ENCODE measurements at regions of chr19 and their contacts with region 1.

Region 1: GRCh38 chr19:6516659-6517291 is 14.1 kb upstream of the TNFSF9 start:
- DNase-seq: peak; percentile 85 to 99 (median 96)

Region 2: GRCh38 chr19:6443986-6444385 is 72.8 kb before region 1 on chr19:
- intact Hi-C with region 1: no loop called
- DNase-seq: no peak

Region 3: GRCh38 chr19:6453951-6454565 is 62.7 kb before region 1 on chr19:
- intact Hi-C with region 1: no loop called
- DNase-seq: no peak

Region 4: DNA sequence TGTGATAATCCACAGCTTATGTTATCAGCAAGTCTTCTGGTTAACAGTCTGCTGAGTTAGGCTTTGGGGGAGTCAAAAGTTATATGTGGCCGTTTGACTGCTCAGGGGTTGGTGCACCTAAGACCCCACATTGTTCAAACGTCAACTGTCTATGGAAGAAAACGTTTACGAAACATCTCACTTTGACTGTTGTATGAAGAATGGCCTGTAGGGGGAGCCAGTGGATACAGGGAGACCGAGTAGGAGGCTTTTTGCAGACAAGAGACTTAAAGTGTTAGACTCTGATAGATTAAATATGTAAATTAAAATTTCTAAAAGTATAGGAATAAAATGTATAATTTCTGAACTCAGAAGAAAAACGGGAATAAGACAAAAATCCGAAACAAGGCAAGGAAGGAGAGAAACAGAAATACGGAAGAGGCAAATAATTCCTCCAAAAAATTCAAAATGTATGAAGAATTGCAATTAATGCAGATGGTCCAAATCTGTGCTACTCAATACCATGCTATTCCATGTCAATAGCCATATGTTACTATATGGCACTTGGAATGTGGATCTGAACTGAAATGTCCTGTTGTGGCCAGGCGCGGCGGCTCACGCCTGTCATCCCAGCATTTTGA is 115.3 kb after region 1 on chr19:
- intact Hi-C with region 1: loop called (anchors 1 kb)
- DNase-seq: peak in 40 of 42 donors; percentile 8 to 96 (median 76)

Region 5: GRCh38 chr19:6862673-6863078 is 345.9 kb after region 1 on chr19:
- intact Hi-C with region 1: loop called (anchors 2 kb)
- DNase-seq: peak; percentile 59 to 88 (median 76)